ENCODE measurements at regions of chr20 and their contacts with region 1.

Region 1: GRCh38 chr20:22825076-22825475 is 210.0 kb upstream of the SSTR4 start:
- DNase-seq: no peak
- H3K4me3 ChIP-seq: no peak overlapping the region
- H3K27ac ChIP-seq: no peak overlapping the region
- H3K4me1 ChIP-seq: peaks cover 0 to 13% (median 0%) of the 10 kb centered on the region in 4 donors
- H3K27me3 ChIP-seq: no peaks in the 10 kb centered on the region
- CTCF ChIP-seq: no peak
- EP300 ChIP-seq: no peak
- POLR2A ChIP-seq: no peak

Region 2: GRCh38 chr20:22763257-22763906 is 61.7 kb before region 1 on chr20:
- intact Hi-C with region 1: loop called (anchors 10 kb)
- DNase-seq: peak; percentile 60 to 68
- H3K4me3 ChIP-seq: no peak overlapping the region
- H3K27ac ChIP-seq: peak overlapping the region; percentile 47 to 76 (median 60)
- H3K4me1 ChIP-seq: peaks cover 0 to 14% (median 10%) of the 10 kb centered on the region in 4 donors
- H3K27me3 ChIP-seq: peaks cover 0 to 7% (median 0%) of the 10 kb centered on the region in 3 donors
- CTCF ChIP-seq: no peak
- EP300 ChIP-seq: no peak
- POLR2A ChIP-seq: no peak

Region 3: GRCh38 chr20:22949331-22950109 is 124.4 kb after region 1 on chr20:
- intact Hi-C with region 1: no loop called
- DNase-seq: no peak
- H3K4me3 ChIP-seq: no peak overlapping the region
- H3K27ac ChIP-seq: no peak overlapping the region
- H3K4me1 ChIP-seq: no peaks in the 10 kb centered on the region
- H3K27me3 ChIP-seq: no peaks in the 10 kb centered on the region
- CTCF ChIP-seq: no peak
- EP300 ChIP-seq: no peak
- POLR2A ChIP-seq: no peak